Naive thymus-derived CD4-positive, alpha-beta T cell (primary cell): ENCODE measurements at regions of chr3 and their contacts with region 1.

Region 1: DNA sequence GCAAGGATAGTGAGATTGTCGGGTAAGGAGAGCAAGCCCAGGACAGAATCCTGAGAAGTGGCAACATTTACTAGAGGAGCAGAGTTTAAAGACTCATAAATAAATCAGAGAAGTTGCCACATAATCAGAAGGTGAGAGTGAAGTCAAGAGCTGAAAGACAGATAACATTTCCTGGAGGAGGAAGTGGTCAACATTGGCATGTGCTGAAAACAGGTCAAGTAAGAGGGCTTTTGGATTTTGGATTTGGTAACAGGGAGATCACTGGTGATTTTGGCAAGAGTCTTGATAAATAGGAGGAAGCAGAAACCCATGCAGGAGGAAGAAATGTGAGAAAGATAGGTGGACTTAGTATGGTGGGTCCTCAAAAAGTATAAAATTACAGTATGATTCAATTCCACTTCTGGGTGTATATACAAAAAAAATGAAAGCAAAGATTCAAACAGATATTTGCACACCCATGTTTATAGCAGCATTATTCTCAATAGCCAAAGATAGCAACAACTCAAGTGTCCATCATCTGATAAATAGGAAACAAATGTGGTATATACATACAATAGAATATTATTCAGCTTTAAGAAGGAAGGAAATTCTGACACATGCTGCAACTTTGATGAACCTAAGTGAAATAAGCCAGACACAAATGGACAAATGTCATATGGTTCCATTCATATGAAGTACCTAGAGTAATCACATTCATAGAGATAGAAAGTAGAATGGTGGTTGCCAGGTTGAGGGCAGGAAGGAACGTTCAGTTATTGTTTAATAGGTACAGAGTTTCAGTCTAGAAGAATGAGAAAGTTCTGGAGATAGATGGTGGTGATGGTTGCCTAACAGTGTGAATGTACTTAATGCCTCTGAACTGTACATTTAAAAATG is 27.3 kb upstream of the MBNL1 start:
- DNase-seq: no peak
- ATAC-seq: no peak
- H3K4me3 ChIP-seq: peak overlapping the region; percentile 24
- H3K4me3 Mint-ChIP-seq: peak overlapping the region; percentile 64 to 97 (median 92)
- H3K27ac ChIP-seq: peak overlapping the region; percentile 72
- H3K27ac Mint-ChIP-seq: peak overlapping the region; percentile 78 to 97 (median 94)
- H3K4me1 ChIP-seq: peaks cover 35 to 57% of the 10 kb centered on the region in 2 donors
- H3K4me1 Mint-ChIP-seq: peaks cover 36 to 79% (median 68%) of the 10 kb centered on the region in 7 donors
- H3K27me3 ChIP-seq: no peaks in the 10 kb centered on the region
- H3K27me3 Mint-ChIP-seq: no peaks in the 10 kb centered on the region

Region 2: DNA sequence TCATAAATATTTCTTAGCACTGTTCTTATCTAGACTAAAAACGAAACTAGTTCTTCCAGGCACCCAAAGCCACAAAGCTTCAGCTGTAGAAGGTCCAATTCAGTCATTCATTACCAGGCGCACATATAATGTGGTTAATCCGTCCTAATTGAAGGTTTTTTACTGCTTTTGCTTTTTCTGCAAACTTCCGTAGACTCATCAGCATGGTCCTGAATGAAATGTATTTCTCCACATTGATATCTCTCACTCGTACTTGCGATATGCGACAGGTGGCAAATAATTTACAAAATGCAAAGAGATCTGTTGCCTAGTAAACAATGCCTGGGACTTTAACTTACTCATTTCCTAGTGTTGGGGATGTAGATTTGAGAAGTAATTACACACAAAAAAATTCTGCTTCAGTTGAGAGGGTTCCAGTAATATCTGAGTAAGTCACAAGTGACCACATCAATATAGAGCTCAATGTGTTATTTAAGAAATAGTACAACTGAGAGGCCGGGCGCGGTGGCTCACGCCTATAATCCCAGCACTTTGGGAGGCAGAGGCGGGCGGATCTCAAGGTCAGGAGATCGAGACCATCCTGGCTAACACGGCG is 47.6 kb before region 1 on chr3:
- CTCF ChIA-PET with region 1: interaction called, 4 read pairs
- POLR2A ChIA-PET with region 1: interaction called, 65 read pairs
- intact Hi-C with region 1: loop called (anchors 1 to 2 kb)
- DNase-seq: peak in 6 of 9 donors; percentile 44 to 63 (median 51)
- ATAC-seq: peak; percentile 70
- H3K4me3 ChIP-seq: peak overlapping the region; percentile 58
- H3K4me3 Mint-ChIP-seq: peak overlapping the region; percentile 72 to 92 (median 86)
- H3K27ac ChIP-seq: peak overlapping the region; percentile 70
- H3K27ac Mint-ChIP-seq: peak overlapping the region; percentile 76 to 100 (median 93)
- H3K4me1 ChIP-seq: peaks cover 43 to 46% of the 10 kb centered on the region in 2 donors
- H3K4me1 Mint-ChIP-seq: peaks cover 52 to 91% (median 85%) of the 10 kb centered on the region in 7 donors
- H3K27me3 ChIP-seq: no peaks in the 10 kb centered on the region
- H3K27me3 Mint-ChIP-seq: no peaks in the 10 kb centered on the region

Region 3: GRCh38 chr3:152205097-152205593 is 36.2 kb before region 1 on chr3:
- CTCF ChIA-PET with region 1: interaction called, 4 read pairs
- POLR2A ChIA-PET with region 1: interaction called, 65 read pairs
- intact Hi-C with region 1: loop called (anchors 1 kb)
- DNase-seq: peak in 5 of 9 donors; percentile 23 to 52 (median 41)
- ATAC-seq: peak; percentile 75
- H3K4me3 ChIP-seq: peak overlapping the region; percentile 65
- H3K4me3 Mint-ChIP-seq: peak overlapping the region; percentile 88 to 100 (median 94)
- H3K27ac ChIP-seq: peak overlapping the region; percentile 84
- H3K27ac Mint-ChIP-seq: peak overlapping the region; percentile 91 to 100 (median 96)
- H3K4me1 ChIP-seq: peaks cover 35 to 49% of the 10 kb centered on the region in 2 donors
- H3K4me1 Mint-ChIP-seq: peaks cover 46 to 84% (median 71%) of the 10 kb centered on the region in 7 donors
- H3K27me3 ChIP-seq: no peaks in the 10 kb centered on the region
- H3K27me3 Mint-ChIP-seq: no peaks in the 10 kb centered on the region

Region 4: DNA sequence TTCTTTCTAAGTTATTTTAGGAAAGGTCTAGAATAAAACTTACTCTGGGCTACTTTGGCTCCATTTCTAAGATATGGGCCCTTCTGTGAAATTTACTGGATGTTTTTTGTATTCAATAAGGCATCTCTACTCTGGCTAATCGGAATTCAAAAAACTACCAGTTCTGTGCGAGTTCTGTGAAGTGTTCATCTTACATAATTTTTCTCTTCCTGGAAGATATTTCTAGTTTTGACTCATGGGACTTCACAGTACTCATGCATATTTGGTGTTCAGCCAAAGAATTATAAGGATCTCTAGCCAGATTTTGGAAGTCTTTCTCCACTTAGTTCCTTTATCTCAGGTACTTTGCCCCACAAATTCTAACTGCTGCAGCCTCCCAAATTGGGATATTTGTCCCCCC is 19.1 kb before region 1 on chr3:
- CTCF ChIA-PET with region 1: interaction called, 5 read pairs
- POLR2A ChIA-PET with region 1: interaction called, 26 read pairs
- intact Hi-C with region 1: loop called (anchors 1 to 2 kb)
- DNase-seq: peak in 1 of 9 donors; percentile 14
- ATAC-seq: peak; percentile 57
- H3K4me3 ChIP-seq: peak overlapping the region; percentile 3
- H3K4me3 Mint-ChIP-seq: peak overlapping the region; percentile 48 to 86 (median 74)
- H3K27ac ChIP-seq: peak overlapping the region; percentile 67
- H3K27ac Mint-ChIP-seq: peak overlapping the region; percentile 65 to 99 (median 92)
- H3K4me1 ChIP-seq: peaks cover 4 to 46% of the 10 kb centered on the region in 2 donors
- H3K4me1 Mint-ChIP-seq: peaks cover 49 to 80% (median 71%) of the 10 kb centered on the region in 7 donors
- H3K27me3 ChIP-seq: no peaks in the 10 kb centered on the region
- H3K27me3 Mint-ChIP-seq: no peaks in the 10 kb centered on the region

Region 5: GRCh38 chr3:152258448-152259393 is 17.3 kb after region 1 on chr3:
- CTCF ChIA-PET with region 1: interaction called, 19 read pairs
- POLR2A ChIA-PET with region 1: interaction called, 252 read pairs
- intact Hi-C with region 1: loop called (anchors 1 kb)
- DNase-seq: peak in 6 of 9 donors; percentile 34 to 90 (median 52)
- ATAC-seq: peak; percentile 87
- H3K4me3 ChIP-seq: peak overlapping the region; percentile 3
- H3K4me3 Mint-ChIP-seq: peak overlapping the region; percentile 71 to 87 (median 81)
- H3K27ac ChIP-seq: peak overlapping the region; percentile 83
- H3K27ac Mint-ChIP-seq: peak overlapping the region; percentile 83 to 99 (median 95)
- H3K4me1 ChIP-seq: peaks cover 72 to 78% of the 10 kb centered on the region in 2 donors
- H3K4me1 Mint-ChIP-seq: peaks cover 68 to 98% (median 90%) of the 10 kb centered on the region in 7 donors
- H3K27me3 ChIP-seq: no peaks in the 10 kb centered on the region
- H3K27me3 Mint-ChIP-seq: no peaks in the 10 kb centered on the region

Region 6: DNA sequence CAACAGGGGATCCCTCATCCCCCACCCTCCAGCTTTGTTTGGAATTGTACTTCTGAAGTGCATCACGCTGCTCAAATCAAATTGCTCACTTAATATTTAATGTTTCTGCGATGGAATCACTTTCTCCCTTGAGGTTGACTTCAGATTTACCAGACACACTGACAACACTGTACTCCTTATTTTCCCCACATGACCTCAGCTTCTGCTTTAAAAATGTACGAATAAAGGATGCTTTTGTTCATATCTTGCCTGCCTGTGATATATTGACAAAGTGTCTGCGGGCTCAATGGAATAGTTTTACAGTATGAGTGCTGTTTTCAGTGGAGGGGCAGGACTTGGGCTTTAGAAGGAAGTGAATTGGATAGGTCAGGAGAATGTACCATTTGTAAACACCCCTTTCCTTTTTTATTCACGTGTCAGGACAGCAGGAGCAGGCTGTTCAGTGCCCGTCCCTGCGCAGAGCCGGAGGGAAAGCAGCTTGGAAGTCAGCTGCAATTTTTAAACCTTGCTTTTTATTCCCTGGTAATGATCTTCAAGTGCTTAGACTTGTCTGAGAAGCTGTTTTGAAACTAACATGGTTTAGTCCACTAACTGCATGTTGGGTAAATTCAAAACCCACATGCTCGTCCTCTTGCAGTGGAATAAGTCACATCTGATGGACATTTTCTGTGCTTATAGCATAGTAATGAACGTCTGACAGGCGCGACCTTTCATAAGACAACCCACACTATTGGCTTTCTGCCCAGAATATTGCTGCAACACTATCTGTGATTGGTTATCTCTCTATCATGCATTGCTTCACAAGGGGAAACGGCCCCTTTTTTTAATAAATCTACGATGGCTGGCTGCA is 57.2 kb after region 1 on chr3:
- CTCF ChIA-PET with region 1: no interaction called
- POLR2A ChIA-PET with region 1: interaction called, 4 read pairs
- intact Hi-C with region 1: loop called in 1 of 2 experiments (anchors 2 kb)
- DNase-seq: peak in 8 of 9 donors; percentile 43 to 77 (median 72)
- ATAC-seq: peak; percentile 83
- H3K4me3 ChIP-seq: peak overlapping the region; percentile 45
- H3K4me3 Mint-ChIP-seq: peak overlapping the region; percentile 70 to 85 (median 76)
- H3K27ac ChIP-seq: peak overlapping the region; percentile 64
- H3K27ac Mint-ChIP-seq: peak overlapping the region; percentile 78 to 98 (median 89)
- H3K4me1 ChIP-seq: peaks cover 80% of the 10 kb centered on the region in 2 donors
- H3K4me1 Mint-ChIP-seq: peaks cover 55 to 95% (median 82%) of the 10 kb centered on the region in 7 donors
- H3K27me3 ChIP-seq: no peaks in the 10 kb centered on the region
- H3K27me3 Mint-ChIP-seq: no peaks in the 10 kb centered on the region

Region 7: GRCh38 chr3:152930514-152930913 is 689.1 kb after region 1 on chr3:
- CTCF ChIA-PET with region 1: no interaction called
- POLR2A ChIA-PET with region 1: no interaction called
- intact Hi-C with region 1: no loop called
- DNase-seq: no peak
- ATAC-seq: no peak
- H3K4me3 ChIP-seq: no peak overlapping the region
- H3K4me3 Mint-ChIP-seq: no peak overlapping the region
- H3K27ac ChIP-seq: no peak overlapping the region
- H3K27ac Mint-ChIP-seq: no peak overlapping the region
- H3K4me1 ChIP-seq: no peaks in the 10 kb centered on the region
- H3K4me1 Mint-ChIP-seq: no peaks in the 10 kb centered on the region
- H3K27me3 ChIP-seq: no peaks in the 10 kb centered on the region
- H3K27me3 Mint-ChIP-seq: peaks cover 0 to 21% (median 8%) of the 10 kb centered on the region in 5 donors